CD8-positive, alpha-beta T cell (primary cell): ENCODE measurements at regions of chr1 and their contacts with region 1.

Region 1: DNA sequence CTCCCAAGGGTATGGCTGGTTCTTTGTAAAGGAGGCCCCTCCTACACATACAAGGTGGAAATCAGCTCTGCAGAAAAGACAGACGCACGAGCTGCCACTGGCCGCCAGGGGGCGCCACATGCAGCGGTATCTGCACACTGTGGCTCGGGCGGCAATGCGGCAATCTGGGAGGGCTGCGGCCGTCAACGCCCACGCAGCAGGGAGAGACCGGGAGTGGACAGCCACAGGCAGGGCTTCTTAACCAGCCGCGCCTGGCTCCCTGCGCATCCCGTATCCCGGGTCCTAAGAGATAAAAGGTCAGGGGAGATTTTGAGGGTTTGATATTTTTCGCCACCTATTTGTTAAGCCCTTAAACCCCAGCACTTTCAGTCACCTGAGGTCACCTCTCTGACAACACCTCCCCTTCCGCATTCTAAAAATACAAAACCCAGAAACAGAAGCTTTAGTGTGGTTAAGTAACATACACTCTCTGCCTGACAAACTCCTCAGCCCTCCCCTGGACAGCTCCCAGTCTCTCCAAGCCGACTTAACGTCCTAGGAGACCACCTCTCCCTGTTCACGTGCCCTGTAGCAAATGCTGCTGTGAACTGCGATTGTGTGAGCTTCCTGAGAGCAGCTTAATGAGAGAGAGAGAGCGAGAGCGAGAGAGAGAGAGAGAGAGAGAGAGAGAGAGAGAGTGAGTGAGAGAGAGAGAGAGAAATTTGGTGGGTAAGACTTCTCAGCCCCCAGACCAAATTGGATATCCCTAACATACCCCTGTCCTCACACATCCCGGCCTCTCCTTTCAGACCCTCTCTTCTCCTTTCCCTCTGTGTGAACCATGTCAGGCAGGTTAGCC is 13.5 kb upstream of the KCNA2 start:
- DNase-seq: peak; percentile 79 to 96 (median 90)
- ATAC-seq: peak; percentile 84
- H3K4me3 ChIP-seq: peak overlapping the region; percentile 62 to 65
- H3K4me3 Mint-ChIP-seq: peak overlapping the region; percentile 89
- H3K27ac ChIP-seq: peak overlapping the region; percentile 58 to 73
- H3K27ac Mint-ChIP-seq: peak overlapping the region; percentile 89
- H3K4me1 ChIP-seq: peaks cover 28% of the 10 kb centered on the region
- H3K4me1 Mint-ChIP-seq: peaks cover 41% of the 10 kb centered on the region
- H3K27me3 ChIP-seq: peaks cover 0 to 4% of the 10 kb centered on the region in 2 experiments
- H3K27me3 Mint-ChIP-seq: no peaks in the 10 kb centered on the region
- CTCF ChIP-seq: peak; percentile 97

Region 2: GRCh38 chr1:110524311-110525251 is 95.0 kb before region 1 on chr1:
- CTCF ChIA-PET with region 1: interaction called, 6 read pairs
- POLR2A ChIA-PET with region 1: no interaction called
- intact Hi-C with region 1: loop called (anchors 1 kb)
- DNase-seq: peak; percentile 8 to 69 (median 44)
- ATAC-seq: peak; percentile 77
- H3K4me3 ChIP-seq: no peak overlapping the region
- H3K4me3 Mint-ChIP-seq: peak overlapping the region; percentile 22
- H3K27ac ChIP-seq: no peak overlapping the region
- H3K27ac Mint-ChIP-seq: no peak overlapping the region
- H3K4me1 ChIP-seq: peaks cover 6% of the 10 kb centered on the region
- H3K4me1 Mint-ChIP-seq: peaks cover 3% of the 10 kb centered on the region
- H3K27me3 ChIP-seq: no peaks in the 10 kb centered on the region
- H3K27me3 Mint-ChIP-seq: peaks cover 26% of the 10 kb centered on the region
- CTCF ChIP-seq: peak; percentile 64

Region 3: DNA sequence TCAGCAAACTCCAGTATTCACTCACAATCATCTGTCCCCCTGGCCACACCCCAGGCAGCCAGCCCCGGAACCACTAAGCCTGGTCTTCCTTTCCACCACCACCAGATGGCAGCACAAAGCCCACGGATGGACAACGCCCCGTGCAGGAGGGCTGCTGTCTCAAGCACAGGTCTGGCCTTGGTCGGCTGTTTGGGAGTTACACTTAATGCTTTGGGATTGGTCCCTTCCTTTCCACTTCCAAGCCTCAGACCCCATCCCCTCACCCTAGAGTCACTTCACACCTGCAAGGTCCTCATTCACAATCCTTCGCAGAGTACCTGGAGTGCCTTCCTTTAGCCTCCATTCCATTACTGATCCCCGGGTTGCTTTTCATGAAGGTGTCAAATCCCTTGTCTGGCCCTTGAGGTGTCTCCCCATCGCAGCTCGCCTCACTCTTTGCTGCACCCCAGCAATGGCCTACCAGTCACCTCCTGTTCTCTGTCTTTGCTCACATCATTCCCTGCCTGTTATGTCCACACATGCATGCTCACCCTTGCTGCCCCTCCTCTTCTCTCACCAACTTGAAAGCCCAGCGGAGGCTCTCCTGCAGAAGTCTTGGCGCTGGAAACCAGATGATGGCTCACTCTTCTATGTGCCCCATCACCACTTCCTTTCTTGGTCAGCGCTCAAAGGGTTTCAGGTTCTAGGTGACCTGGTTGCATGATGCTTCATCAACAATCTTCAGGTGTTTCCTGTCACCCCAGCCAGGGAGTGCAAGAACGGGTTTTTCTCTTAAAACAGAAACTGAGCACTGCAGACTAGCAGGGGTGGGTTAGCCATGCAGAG is 11.4 kb after region 1 on chr1:
- CTCF ChIA-PET with region 1: interaction called, 86 read pairs
- POLR2A ChIA-PET with region 1: interaction called, 7 read pairs
- intact Hi-C with region 1: loop called in 1 of 2 experiments (anchors 1 kb)
- DNase-seq: peak; percentile 66 to 94 (median 85)
- ATAC-seq: peak; percentile 72
- H3K4me3 ChIP-seq: peak overlapping the region; percentile 27
- H3K4me3 Mint-ChIP-seq: no peak overlapping the region
- H3K27ac ChIP-seq: peak overlapping the region; percentile 28 to 55
- H3K27ac Mint-ChIP-seq: no peak overlapping the region
- H3K4me1 ChIP-seq: peaks cover 55% of the 10 kb centered on the region
- H3K4me1 Mint-ChIP-seq: peaks cover 46% of the 10 kb centered on the region
- H3K27me3 ChIP-seq: no peaks in the 10 kb centered on the region
- H3K27me3 Mint-ChIP-seq: no peaks in the 10 kb centered on the region
- CTCF ChIP-seq: peak; percentile 70

Region 4: DNA sequence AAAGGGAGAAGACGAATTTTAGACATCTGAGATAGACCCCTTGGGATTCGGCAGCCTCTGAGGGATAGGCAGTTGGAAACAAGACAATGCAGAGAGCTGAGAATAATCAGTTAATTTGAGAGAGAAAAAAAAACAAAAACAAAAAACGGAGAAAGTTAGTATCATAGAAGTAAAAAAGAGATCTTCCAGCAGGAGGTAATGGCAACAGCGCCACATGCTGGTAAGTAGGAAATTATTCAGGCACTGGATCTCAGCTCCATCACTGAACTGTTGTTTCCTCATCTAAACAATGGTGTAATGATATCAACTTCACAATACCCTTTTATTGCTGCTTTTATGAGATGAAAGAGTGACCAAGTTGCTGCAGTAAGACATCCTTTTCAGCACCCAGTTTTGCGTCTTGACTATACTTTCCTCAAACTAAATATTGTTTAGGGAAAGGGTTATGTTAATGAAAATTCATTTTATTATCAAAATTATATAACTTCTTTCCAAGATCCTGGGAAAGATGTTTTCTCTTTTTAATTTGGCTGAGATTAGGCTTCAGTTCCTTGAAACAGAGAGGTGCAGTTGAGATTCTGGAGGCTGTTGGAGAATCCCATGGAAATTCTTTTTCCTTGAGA is 146.5 kb after region 1 on chr1:
- CTCF ChIA-PET with region 1: interaction called, 168 read pairs
- POLR2A ChIA-PET with region 1: interaction called, 30 read pairs
- intact Hi-C with region 1: loop called (anchors 1 kb)
- DNase-seq: peak; percentile 11 to 86 (median 55)
- ATAC-seq: peak; percentile 87
- H3K4me3 ChIP-seq: no peak overlapping the region
- H3K4me3 Mint-ChIP-seq: no peak overlapping the region
- H3K27ac ChIP-seq: no peak overlapping the region
- H3K27ac Mint-ChIP-seq: no peak overlapping the region
- H3K4me1 ChIP-seq: no peaks in the 10 kb centered on the region
- H3K4me1 Mint-ChIP-seq: peaks cover 2% of the 10 kb centered on the region
- H3K27me3 ChIP-seq: no peaks in the 10 kb centered on the region
- H3K27me3 Mint-ChIP-seq: peaks cover 10% of the 10 kb centered on the region
- CTCF ChIP-seq: peak; percentile 95

Region 5: GRCh38 chr1:110787328-110788071 is 167.9 kb after region 1 on chr1:
- CTCF ChIA-PET with region 1: interaction called, 108 read pairs
- POLR2A ChIA-PET with region 1: interaction called, 14 read pairs
- intact Hi-C with region 1: loop called (anchors 1 kb)
- DNase-seq: peak in 8 of 9 experiments; percentile 16 to 79 (median 50)
- ATAC-seq: peak; percentile 69
- H3K4me3 ChIP-seq: peak overlapping the region; percentile 23 to 25
- H3K4me3 Mint-ChIP-seq: peak overlapping the region; percentile 71
- H3K27ac ChIP-seq: peak overlapping the region; percentile 22 to 64
- H3K27ac Mint-ChIP-seq: peak overlapping the region; percentile 82
- H3K4me1 ChIP-seq: peaks cover 58% of the 10 kb centered on the region
- H3K4me1 Mint-ChIP-seq: peaks cover 68% of the 10 kb centered on the region
- H3K27me3 ChIP-seq: no peaks in the 10 kb centered on the region
- H3K27me3 Mint-ChIP-seq: no peaks in the 10 kb centered on the region
- CTCF ChIP-seq: no peak

Region 6: GRCh38 chr1:111030590-111030989 is 411.0 kb after region 1 on chr1:
- CTCF ChIA-PET with region 1: no interaction called
- POLR2A ChIA-PET with region 1: no interaction called
- intact Hi-C with region 1: loop called in 1 of 2 experiments (anchors 5 kb)
- DNase-seq: peak in 8 of 9 experiments; percentile 37 to 74 (median 56)
- ATAC-seq: no peak
- H3K4me3 ChIP-seq: no peak overlapping the region
- H3K4me3 Mint-ChIP-seq: no peak overlapping the region
- H3K27ac ChIP-seq: no peak overlapping the region
- H3K27ac Mint-ChIP-seq: no peak overlapping the region
- H3K4me1 ChIP-seq: no peaks in the 10 kb centered on the region
- H3K4me1 Mint-ChIP-seq: no peaks in the 10 kb centered on the region
- H3K27me3 ChIP-seq: no peaks in the 10 kb centered on the region
- H3K27me3 Mint-ChIP-seq: peaks cover 9% of the 10 kb centered on the region
- CTCF ChIP-seq: peak; percentile 81

Region 7: GRCh38 chr1:112172294-112172882 is 1552.8 kb after region 1 on chr1:
- CTCF ChIA-PET with region 1: no interaction called
- POLR2A ChIA-PET with region 1: no interaction called
- intact Hi-C with region 1: no loop called
- DNase-seq: no peak
- ATAC-seq: no peak
- H3K4me3 ChIP-seq: no peak overlapping the region
- H3K4me3 Mint-ChIP-seq: no peak overlapping the region
- H3K27ac ChIP-seq: no peak overlapping the region
- H3K27ac Mint-ChIP-seq: no peak overlapping the region
- H3K4me1 ChIP-seq: no peaks in the 10 kb centered on the region
- H3K4me1 Mint-ChIP-seq: no peaks in the 10 kb centered on the region
- H3K27me3 ChIP-seq: peaks cover 0 to 3% of the 10 kb centered on the region in 2 experiments
- H3K27me3 Mint-ChIP-seq: peaks cover 10% of the 10 kb centered on the region
- CTCF ChIP-seq: no peak